ENCODE measurements at regions of chr12 and their contacts with region 1.

Region 1: GRCh38 chr12:79555028-79555930 is 135.5 kb downstream of the PAWR start:
- DNase-seq: peak; percentile 79
- ATAC-seq: peak; percentile 75
- H3K4me3 ChIP-seq: no peak overlapping the region
- H3K27ac ChIP-seq: no peak overlapping the region; the same call in 1 of the 2 replicates
- H3K4me1 ChIP-seq: peaks cover 15% of the 10 kb centered on the region; the same call in 1 of the 2 replicates
- H3K27me3 ChIP-seq: no peaks in the 10 kb centered on the region
- CTCF ChIP-seq: peak; percentile 89
- POLR2A ChIP-seq: no peak; the same call in 1 of the 2 replicates
- RAD21 ChIP-seq: peak; percentile 87

Region 2: GRCh38 chr12:79420146-79420618 is 135.1 kb before region 1 on chr12:
- CTCF ChIA-PET with region 1: interaction called, 4 read pairs
- POLR2A ChIA-PET with region 1: no interaction called
- dilution Hi-C with region 1: no loop called
- in situ Hi-C with region 1: no loop called
- intact Hi-C with region 1: loop called (anchors 2 kb)
- DNase-seq: peak; percentile 95
- ATAC-seq: peak; percentile 66
- H3K4me3 ChIP-seq: no peak overlapping the region
- H3K27ac ChIP-seq: peak overlapping the region; percentile 72
- H3K4me1 ChIP-seq: peaks cover 24% of the 10 kb centered on the region
- H3K27me3 ChIP-seq: no peaks in the 10 kb centered on the region
- CTCF ChIP-seq: peak; percentile 79
- POLR2A ChIP-seq: no peak
- RAD21 ChIP-seq: peak; percentile 80

Region 3: DNA sequence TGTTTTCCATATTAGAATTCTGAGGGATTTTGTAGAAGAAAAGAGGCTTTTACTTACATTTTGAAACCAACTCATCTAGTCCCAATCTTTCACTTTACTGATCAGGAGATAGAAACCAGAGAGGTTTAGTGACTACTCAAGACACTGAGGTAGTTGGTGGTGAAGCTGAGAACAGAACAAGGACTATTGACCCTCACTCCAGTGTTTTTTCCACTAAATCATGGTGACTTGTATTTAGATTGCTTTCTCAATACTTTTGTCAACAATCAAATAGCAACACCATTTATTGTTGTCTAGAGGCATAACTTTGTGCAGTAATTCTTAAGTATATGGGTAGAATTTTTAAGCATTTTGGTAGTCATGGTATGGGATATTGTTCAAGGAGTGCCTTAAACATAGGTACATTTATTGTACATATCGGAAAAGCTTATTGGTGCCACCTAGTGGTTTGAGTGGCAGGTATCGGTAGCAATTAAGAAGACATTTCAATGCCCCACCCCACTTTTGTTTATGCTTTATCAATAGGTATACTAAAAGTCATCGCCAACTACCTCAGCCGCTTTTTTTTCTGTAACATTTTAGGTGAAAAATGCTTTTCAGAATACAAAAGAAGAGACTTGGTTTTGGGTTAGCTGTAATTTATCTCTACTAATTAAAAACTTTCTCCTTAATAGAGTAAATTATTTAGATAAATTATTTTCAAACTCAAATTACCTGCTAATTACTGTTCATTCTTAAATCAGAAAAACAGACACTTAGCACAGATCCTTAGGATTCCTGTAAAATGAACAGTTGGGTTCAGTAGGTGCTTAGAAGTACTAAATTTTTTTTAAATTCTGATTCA is 182.8 kb after region 1 on chr12:
- CTCF ChIA-PET with region 1: interaction called, 4 read pairs
- POLR2A ChIA-PET with region 1: no interaction called
- dilution Hi-C with region 1: no loop called
- in situ Hi-C with region 1: loop called (anchors 5 kb)
- intact Hi-C with region 1: loop called (anchors 1 kb)
- DNase-seq: peak; percentile 70
- ATAC-seq: peak; percentile 63
- H3K4me3 ChIP-seq: no peak overlapping the region
- H3K27ac ChIP-seq: no peak overlapping the region
- H3K4me1 ChIP-seq: no peaks in the 10 kb centered on the region
- H3K27me3 ChIP-seq: no peaks in the 10 kb centered on the region
- CTCF ChIP-seq: peak; percentile 70
- POLR2A ChIP-seq: no peak
- RAD21 ChIP-seq: peak; percentile 72

Region 4: DNA sequence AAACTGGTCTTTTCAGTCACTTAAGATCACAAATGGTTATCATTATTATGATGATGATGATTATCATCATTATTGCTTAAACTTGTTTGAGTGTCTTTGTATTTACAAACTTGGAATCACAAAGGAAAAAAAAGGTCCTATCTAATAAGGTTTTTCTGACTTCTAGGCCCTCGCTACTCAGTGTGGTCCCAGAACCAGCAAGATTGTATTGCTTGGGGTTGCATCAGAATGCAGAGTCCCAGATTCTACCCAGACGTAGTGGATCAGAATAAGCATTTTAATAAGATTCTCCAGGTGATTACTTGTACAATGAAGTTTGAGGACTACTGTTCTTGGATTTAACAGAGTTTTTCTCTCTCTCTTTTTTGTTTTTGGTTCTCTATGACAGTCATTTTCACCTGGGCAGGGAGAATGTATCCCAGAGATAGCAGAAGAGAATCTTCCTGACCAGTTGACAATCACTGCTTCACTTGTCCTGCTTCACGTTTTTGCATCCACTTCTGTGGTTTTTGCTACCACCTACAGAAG is 408.9 kb after region 1 on chr12:
- CTCF ChIA-PET with region 1: no interaction called
- POLR2A ChIA-PET with region 1: no interaction called
- dilution Hi-C with region 1: no loop called
- in situ Hi-C with region 1: no loop called
- intact Hi-C with region 1: no loop called
- DNase-seq: no peak
- ATAC-seq: no peak
- H3K4me3 ChIP-seq: no peak overlapping the region
- H3K27ac ChIP-seq: no peak overlapping the region
- H3K4me1 ChIP-seq: no peaks in the 10 kb centered on the region
- H3K27me3 ChIP-seq: no peaks in the 10 kb centered on the region
- CTCF ChIP-seq: no peak
- POLR2A ChIP-seq: no peak
- RAD21 ChIP-seq: no peak

Region 5: DNA sequence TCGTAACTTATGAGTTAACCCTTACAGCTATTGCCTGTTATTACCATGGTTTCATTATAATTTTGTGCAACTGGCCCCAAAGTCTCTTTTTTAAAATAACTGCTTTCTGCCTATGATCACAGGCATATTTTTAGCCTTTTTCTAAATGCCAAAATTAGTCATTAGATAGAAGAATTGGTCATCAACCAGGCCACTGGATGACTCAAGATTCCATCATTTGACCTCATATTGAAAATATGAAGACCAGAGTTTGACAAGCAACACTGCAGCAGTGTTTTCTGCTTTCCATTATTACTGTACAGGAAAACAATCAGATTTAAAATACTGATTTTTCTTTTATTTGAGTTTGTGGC is 489.4 kb after region 1 on chr12:
- CTCF ChIA-PET with region 1: no interaction called
- POLR2A ChIA-PET with region 1: no interaction called
- dilution Hi-C with region 1: no loop called
- in situ Hi-C with region 1: no loop called
- intact Hi-C with region 1: loop called (anchors 10 kb)
- DNase-seq: peak; percentile 94
- ATAC-seq: peak; percentile 65
- H3K4me3 ChIP-seq: no peak overlapping the region
- H3K27ac ChIP-seq: no peak overlapping the region; the same call in 1 of the 2 replicates
- H3K4me1 ChIP-seq: peaks cover 4% of the 10 kb centered on the region; the same call in 1 of the 2 replicates
- H3K27me3 ChIP-seq: no peaks in the 10 kb centered on the region
- CTCF ChIP-seq: no peak
- POLR2A ChIP-seq: no peak
- RAD21 ChIP-seq: no peak

Region 6: DNA sequence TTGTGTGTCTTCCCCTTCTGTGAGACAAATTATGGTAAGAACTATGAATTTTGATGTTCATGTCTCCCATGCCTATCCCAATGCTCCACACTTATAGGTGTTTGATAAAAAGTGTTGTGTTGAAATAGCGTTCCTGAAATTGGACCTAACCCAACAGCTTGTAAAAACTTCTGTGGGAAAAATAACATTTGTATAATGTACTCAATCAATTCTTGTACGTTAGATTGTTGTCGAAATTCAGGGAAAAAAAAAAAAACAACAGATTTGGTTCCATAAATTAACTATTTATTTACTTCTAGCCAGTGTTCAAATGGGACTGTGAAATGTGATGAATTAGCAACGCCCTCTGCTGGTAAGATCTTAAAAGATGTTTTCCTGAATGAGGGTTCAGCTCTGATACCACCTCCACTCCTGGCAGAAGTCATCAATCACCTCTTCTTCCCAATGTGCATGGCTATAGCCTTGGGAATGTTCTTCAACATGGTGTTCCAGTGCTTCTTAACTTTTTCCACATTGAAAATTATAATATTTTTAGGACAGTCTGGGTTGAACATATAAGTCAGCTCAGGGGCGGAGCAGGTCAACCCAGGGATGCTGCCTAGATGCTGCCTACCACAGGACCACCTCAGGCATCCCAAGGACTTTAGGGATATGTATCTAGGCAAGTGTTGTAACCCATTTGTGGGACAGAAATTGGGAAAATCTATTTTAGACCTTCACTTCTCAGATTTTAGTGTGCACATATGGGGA is 714.7 kb after region 1 on chr12:
- CTCF ChIA-PET with region 1: no interaction called
- POLR2A ChIA-PET with region 1: no interaction called
- dilution Hi-C with region 1: no loop called
- in situ Hi-C with region 1: no loop called
- intact Hi-C with region 1: loop called (anchors 1 kb)
- DNase-seq: peak; percentile 60
- ATAC-seq: peak; percentile 64
- H3K4me3 ChIP-seq: no peak overlapping the region
- H3K27ac ChIP-seq: no peak overlapping the region
- H3K4me1 ChIP-seq: peaks cover 4% of the 10 kb centered on the region
- H3K27me3 ChIP-seq: no peaks in the 10 kb centered on the region
- CTCF ChIP-seq: peak; percentile 70
- POLR2A ChIP-seq: no peak
- RAD21 ChIP-seq: peak; percentile 66

Measured in IMR-90 (cell line).